ENCODE measurements at regions of chr6 and their contacts with region 1.

Region 1: GRCh38 chr6:34392497-34393190 is at the start of gene NUDT3:
- DNase-seq: peak; percentile 89
- H3K4me3 ChIP-seq: peak within 1 kb of the TSS; percentile 58 to 99 (median 88)
- H3K27ac ChIP-seq: peak within 1 kb of the TSS; percentile 62
- H3K4me1 ChIP-seq: peaks cover 13% of the 10 kb centered on the region
- H3K27me3 ChIP-seq: no peaks in the 10 kb centered on the region
- CTCF ChIP-seq: peak; percentile 69 to 84
- total RNA-seq, gene NUDT3: 17.9 to 20.2 TPM

Region 2: GRCh38 chr6:34196126-34196830 is 196.4 kb before region 1 on chr6:
- CTCF ChIA-PET with region 1: interaction called, 5 read pairs
- dilution Hi-C with region 1: no loop called
- in situ Hi-C with region 1: no loop called
- intact Hi-C with region 1: loop called (anchors 1 kb)
- DNase-seq: peak; percentile 45
- H3K4me3 ChIP-seq: peak overlapping the region; percentile 18 to 47 (median 40)
- H3K27ac ChIP-seq: no peak overlapping the region
- H3K4me1 ChIP-seq: peaks cover 11% of the 10 kb centered on the region
- H3K27me3 ChIP-seq: no peaks in the 10 kb centered on the region
- CTCF ChIP-seq: peak; percentile 71 to 98

Region 3: DNA sequence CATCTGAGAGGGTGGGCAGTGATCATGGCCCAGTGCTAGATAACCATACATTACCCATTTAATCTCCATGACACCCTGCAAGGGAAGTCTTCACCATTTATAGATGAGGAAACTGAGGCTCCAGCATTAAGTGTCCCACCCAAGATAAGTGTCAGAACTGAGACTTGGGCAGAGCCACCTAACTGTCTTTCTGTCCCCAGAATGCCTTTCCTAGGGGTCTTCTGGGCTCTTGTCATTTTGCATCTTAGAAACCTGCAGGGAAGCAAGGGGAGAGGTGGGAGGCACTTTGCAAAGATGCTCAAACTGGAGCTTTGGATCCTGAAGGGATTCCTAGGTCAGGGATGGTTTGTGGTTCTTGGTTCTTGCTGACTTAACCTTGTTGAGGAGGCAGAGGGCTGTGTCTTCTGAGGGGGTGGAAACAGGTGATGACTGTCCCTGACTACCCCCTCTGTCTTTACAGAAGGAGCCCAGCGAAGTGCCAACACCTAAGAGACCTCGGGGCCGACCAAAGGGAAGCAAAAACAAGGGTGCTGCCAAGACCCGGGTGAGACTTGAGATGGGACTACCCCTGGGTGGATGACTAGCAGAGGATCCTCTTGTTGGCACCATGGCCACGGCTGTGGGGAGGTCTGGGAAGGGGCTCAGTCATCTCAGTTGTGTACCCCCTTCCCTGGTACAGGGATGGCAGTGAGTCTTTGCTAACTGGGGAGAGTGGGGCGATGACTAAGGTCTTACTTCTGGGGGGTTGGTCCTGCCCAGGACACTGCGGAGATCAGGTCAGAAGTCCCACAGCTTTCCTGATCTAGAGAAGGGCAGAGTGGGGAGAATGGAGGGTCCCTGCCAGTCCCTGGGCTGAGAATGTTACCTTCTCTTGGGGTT is 150.2 kb before region 1 on chr6:
- CTCF ChIA-PET with region 1: interaction called, 13 read pairs
- dilution Hi-C with region 1: no loop called
- in situ Hi-C with region 1: no loop called
- intact Hi-C with region 1: no loop called
- DNase-seq: no peak
- H3K4me3 ChIP-seq: no peak overlapping the region
- H3K27ac ChIP-seq: peak overlapping the region; percentile 26
- H3K4me1 ChIP-seq: peaks cover 85% of the 10 kb centered on the region
- H3K27me3 ChIP-seq: no peaks in the 10 kb centered on the region
- CTCF ChIP-seq: no peak

Region 4: GRCh38 chr6:34248727-34249551 is 143.7 kb before region 1 on chr6 and contains the start of gene SMIM29:
- CTCF ChIA-PET with region 1: no interaction called
- dilution Hi-C with region 1: no loop called
- in situ Hi-C with region 1: no loop called
- intact Hi-C with region 1: loop called (anchors 1 kb)
- DNase-seq: peak; percentile 94
- H3K4me3 ChIP-seq: peak within 1 kb of the TSS; percentile 83 to 95 (median 84)
- H3K27ac ChIP-seq: peak within 1 kb of the TSS; percentile 48
- H3K4me1 ChIP-seq: peaks cover 47% of the 10 kb centered on the region
- H3K27me3 ChIP-seq: no peaks in the 10 kb centered on the region
- CTCF ChIP-seq: peak; percentile 38 to 87
- total RNA-seq, gene SMIM29: 20.3 to 40.6 TPM

Region 5: DNA sequence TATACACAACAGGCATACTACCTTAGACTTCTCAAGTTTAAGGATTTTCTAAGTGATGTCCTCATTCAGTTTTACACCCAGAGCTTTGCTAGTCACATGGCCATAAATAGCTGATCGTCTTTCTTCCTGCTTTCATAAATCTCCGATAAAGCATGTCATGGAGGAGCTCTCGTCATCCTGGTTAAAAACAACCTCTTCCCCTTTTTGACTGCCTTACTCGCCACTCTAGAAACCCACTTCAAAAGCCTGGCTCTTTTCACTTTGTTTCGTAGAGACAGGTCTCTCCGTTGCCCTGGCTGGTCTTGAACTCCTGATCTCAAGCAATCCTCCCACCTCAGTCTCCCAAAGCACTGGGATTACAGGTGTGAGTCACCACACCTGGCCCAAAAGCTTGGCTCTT is 76.9 kb before region 1 on chr6:
- CTCF ChIA-PET with region 1: no interaction called
- dilution Hi-C with region 1: no loop called
- in situ Hi-C with region 1: no loop called
- intact Hi-C with region 1: loop called (anchors 5 kb)
- DNase-seq: no peak
- H3K4me3 ChIP-seq: no peak overlapping the region
- H3K27ac ChIP-seq: no peak overlapping the region
- H3K4me1 ChIP-seq: no peaks in the 10 kb centered on the region
- H3K27me3 ChIP-seq: no peaks in the 10 kb centered on the region
- CTCF ChIP-seq: no peak

Region 6: GRCh38 chr6:34358389-34358905 is 34.2 kb before region 1 on chr6:
- CTCF ChIA-PET with region 1: no interaction called
- dilution Hi-C with region 1: no loop called
- in situ Hi-C with region 1: no loop called
- intact Hi-C with region 1: loop called (anchors 2 kb)
- DNase-seq: no peak
- H3K4me3 ChIP-seq: no peak overlapping the region
- H3K27ac ChIP-seq: no peak overlapping the region
- H3K4me1 ChIP-seq: peaks cover 17% of the 10 kb centered on the region
- H3K27me3 ChIP-seq: no peaks in the 10 kb centered on the region
- CTCF ChIP-seq: no peak

Region 7: DNA sequence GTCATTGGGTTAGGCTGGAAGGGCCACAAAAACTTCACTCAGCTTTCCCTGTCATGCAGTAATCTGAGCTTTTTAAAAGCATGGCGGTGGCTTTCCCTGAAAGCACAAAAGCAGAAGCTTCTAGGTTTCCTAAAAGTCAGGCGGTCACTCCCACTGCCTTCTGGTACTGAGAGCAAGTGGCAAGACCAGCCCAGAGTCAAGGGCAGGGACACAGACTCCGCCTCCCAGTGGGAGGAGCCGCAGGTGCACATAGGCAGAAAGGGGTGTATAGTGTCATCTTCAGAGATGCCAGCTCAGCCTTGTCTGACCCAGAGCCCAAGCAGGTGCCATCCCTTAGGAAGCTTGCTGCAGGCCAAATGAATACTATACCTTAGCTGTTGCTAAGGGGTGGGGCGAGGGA is 55.3 kb after region 1 on chr6:
- CTCF ChIA-PET with region 1: no interaction called
- dilution Hi-C with region 1: no loop called
- in situ Hi-C with region 1: no loop called
- intact Hi-C with region 1: no loop called
- DNase-seq: no peak
- H3K4me3 ChIP-seq: no peak overlapping the region
- H3K27ac ChIP-seq: no peak overlapping the region
- H3K4me1 ChIP-seq: no peaks in the 10 kb centered on the region
- H3K27me3 ChIP-seq: no peaks in the 10 kb centered on the region
- CTCF ChIP-seq: no peak